WTC11 (cell line): ENCODE measurements at regions of chr1 and their contacts with region 1.

Region 1: GRCh38 chr1:43073490-43074230 is 98.4 kb downstream of the EBNA1BP2 start:
- DNase-seq: peak; percentile 79
- ATAC-seq: peak; percentile 73
- H3K4me3 Mint-ChIP-seq: no peak overlapping the region
- H3K27ac Mint-ChIP-seq: peak overlapping the region; percentile 92; the same call in 1 of the 2 replicates
- H3K4me1 Mint-ChIP-seq: peaks cover 50% of the 10 kb centered on the region
- H3K27me3 Mint-ChIP-seq: peaks cover 4% of the 10 kb centered on the region
- CTCF ChIP-seq: peak; percentile 96

Region 2: GRCh38 chr1:42816585-42817434 is 256.9 kb before region 1 on chr1 and contains the starts of genes ERMAP and SVBP:
- CTCF ChIA-PET with region 1: interaction called, 10 read pairs
- POLR2A ChIA-PET with region 1: no interaction called
- DNase-seq: peak; percentile 91
- ATAC-seq: peak; percentile 83
- H3K4me3 Mint-ChIP-seq: peak within 1 kb of the TSS; percentile 78
- H3K27ac Mint-ChIP-seq: peak within 1 kb of the TSS; percentile 88
- H3K4me1 Mint-ChIP-seq: peaks cover 17% of the 10 kb centered on the region
- H3K27me3 Mint-ChIP-seq: no peaks in the 10 kb centered on the region
- CTCF ChIP-seq: no peak
- total RNA-seq, gene ERMAP: 2.6 to 4.2 TPM (median 3.1 TPM) in 3 replicates
- total RNA-seq, gene SVBP: 28.7 to 31.3 TPM (median 30.7 TPM) in 3 replicates

Region 3: GRCh38 chr1:42904434-42904833 is 169.2 kb before region 1 on chr1:
- CTCF ChIA-PET with region 1: interaction called, 16 read pairs
- POLR2A ChIA-PET with region 1: no interaction called
- DNase-seq: no peak
- ATAC-seq: peak; percentile 88
- H3K4me3 Mint-ChIP-seq: no peak overlapping the region
- H3K27ac Mint-ChIP-seq: no peak overlapping the region
- H3K4me1 Mint-ChIP-seq: peaks cover 4% of the 10 kb centered on the region
- H3K27me3 Mint-ChIP-seq: peaks cover 11% of the 10 kb centered on the region
- CTCF ChIP-seq: no peak

Region 4: DNA sequence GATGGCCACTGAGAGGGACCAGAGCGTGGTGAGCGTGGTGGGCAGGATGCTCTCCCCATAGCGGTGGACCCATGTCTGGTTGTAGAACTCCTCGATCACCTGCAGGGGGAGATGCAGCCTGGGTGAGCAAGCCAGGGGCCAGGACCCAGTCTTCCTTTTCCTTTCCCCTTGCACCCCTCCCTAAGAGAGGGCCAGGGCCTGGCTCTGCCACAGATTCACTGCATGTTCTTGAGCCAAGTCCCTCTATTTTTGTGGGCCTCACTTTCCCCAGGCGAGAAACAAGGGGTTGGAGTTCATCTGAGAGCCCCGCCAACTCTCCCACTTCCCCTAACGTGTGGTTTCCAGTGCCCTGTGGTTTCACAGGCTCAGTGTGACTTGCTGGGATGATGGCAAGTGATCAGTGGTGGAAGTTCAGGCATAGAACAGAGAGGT is 142.5 kb before region 1 on chr1:
- CTCF ChIA-PET with region 1: interaction called, 33 read pairs
- POLR2A ChIA-PET with region 1: interaction called, 4 read pairs
- DNase-seq: peak; percentile 58
- ATAC-seq: peak; percentile 85
- H3K4me3 Mint-ChIP-seq: no peak overlapping the region
- H3K27ac Mint-ChIP-seq: peak overlapping the region; percentile 94
- H3K4me1 Mint-ChIP-seq: peaks cover 74% of the 10 kb centered on the region
- H3K27me3 Mint-ChIP-seq: no peaks in the 10 kb centered on the region
- CTCF ChIP-seq: peak; percentile 62

Region 5: GRCh38 chr1:42952303-42953001 is 121.2 kb before region 1 on chr1:
- CTCF ChIA-PET with region 1: interaction called, 46 read pairs
- POLR2A ChIA-PET with region 1: interaction called, 3 read pairs
- DNase-seq: no peak
- ATAC-seq: no peak
- H3K4me3 Mint-ChIP-seq: peak overlapping the region; percentile 99
- H3K27ac Mint-ChIP-seq: peak overlapping the region; percentile 94
- H3K4me1 Mint-ChIP-seq: peaks cover 88% of the 10 kb centered on the region
- H3K27me3 Mint-ChIP-seq: no peaks in the 10 kb centered on the region; the same call in 1 of the 2 replicates
- CTCF ChIP-seq: no peak

Region 6: DNA sequence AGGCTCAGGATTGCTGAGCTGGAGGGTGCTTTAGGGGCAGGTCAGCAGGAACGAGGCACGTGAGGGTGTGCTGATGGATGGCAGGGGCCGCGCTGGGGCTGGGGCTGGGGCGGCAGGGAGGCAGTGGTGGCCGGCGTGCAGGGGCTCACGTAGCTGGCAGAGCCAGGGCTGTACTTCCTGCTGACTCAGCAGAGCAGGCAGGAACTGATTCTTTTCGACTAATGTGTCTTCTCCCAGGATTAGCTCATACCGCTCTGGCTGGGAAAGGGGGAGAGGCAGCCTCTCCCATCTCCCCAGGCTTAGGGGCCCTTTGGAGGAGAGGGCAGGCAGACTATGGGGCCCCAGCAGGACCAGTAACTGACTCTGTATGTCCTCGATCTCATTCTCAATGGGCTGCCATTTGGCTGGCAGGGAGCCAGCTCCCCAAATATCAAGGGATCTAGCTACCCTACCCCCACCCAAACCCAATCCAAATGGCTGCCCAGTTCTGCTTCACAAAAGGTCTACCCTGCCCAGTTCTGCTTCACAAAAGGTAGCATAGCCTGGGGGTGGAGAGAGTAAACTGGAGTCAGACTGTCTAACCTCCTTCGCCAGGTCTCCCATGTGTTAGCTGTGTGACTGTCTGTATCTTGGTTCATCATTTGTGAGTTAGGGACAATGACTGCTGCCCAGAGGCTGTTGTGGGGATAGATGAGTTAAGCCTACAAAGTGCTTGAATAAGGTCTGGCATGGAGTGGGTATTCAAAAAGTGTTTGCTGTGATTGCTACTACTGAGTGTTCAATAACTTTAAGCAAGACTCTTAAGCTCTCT is 14.9 kb before region 1 on chr1:
- CTCF ChIA-PET with region 1: interaction called, 49 read pairs
- POLR2A ChIA-PET with region 1: no interaction called
- DNase-seq: peak; percentile 31
- ATAC-seq: peak; percentile 69
- H3K4me3 Mint-ChIP-seq: no peak overlapping the region
- H3K27ac Mint-ChIP-seq: no peak overlapping the region; the same call in 1 of the 2 replicates
- H3K4me1 Mint-ChIP-seq: peaks cover 41% of the 10 kb centered on the region
- H3K27me3 Mint-ChIP-seq: no peaks in the 10 kb centered on the region; the same call in 1 of the 2 replicates
- CTCF ChIP-seq: no peak

Region 7: DNA sequence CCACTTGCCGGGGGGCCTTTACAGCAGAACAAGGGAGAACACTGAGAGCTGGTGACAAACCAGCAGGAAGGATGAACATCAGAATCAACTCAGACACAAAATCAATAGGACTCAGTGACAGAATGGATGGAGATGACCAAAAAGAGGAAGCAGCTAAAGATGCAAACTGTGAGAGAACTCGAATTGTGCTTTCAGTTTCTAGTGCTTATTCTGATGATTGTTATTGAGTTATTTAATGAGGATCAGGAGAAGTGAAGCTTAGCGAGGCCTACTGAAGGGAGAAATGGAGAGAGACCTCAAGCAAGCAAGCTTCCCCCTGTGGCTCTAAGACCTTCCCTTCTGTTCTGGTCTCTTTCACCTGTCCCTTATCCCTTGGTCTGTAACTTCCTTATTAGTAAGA is 165.8 kb after region 1 on chr1:
- CTCF ChIA-PET with region 1: no interaction called
- POLR2A ChIA-PET with region 1: no interaction called
- DNase-seq: no peak
- ATAC-seq: no peak
- H3K4me3 Mint-ChIP-seq: no peak overlapping the region
- H3K27ac Mint-ChIP-seq: no peak overlapping the region
- H3K4me1 Mint-ChIP-seq: no peaks in the 10 kb centered on the region
- H3K27me3 Mint-ChIP-seq: peaks cover 10% of the 10 kb centered on the region
- CTCF ChIP-seq: no peak